Endothelial cell of umbilical vein (primary cell): ENCODE measurements at regions of chr1 and their contacts with region 1.

Region 1: GRCh38 chr1:145858894-145859490 is at the start of gene PIAS3:
- DNase-seq: peak; percentile 97
- H3K4me3 ChIP-seq: peak within 1 kb of the TSS; percentile 64 to 78 (median 71)
- H3K27ac ChIP-seq: peak within 1 kb of the TSS; percentile 43
- H3K4me1 ChIP-seq: peaks cover 7% of the 10 kb centered on the region
- H3K27me3 ChIP-seq: peaks cover 2 to 4% of the 10 kb centered on the region in 2 experiments
- CTCF ChIP-seq: no peak
- POLR2A ChIP-seq: no peak
- total RNA-seq, gene PIAS3: 50.1 and 53.3 TPM in 2 replicates

Region 2: DNA sequence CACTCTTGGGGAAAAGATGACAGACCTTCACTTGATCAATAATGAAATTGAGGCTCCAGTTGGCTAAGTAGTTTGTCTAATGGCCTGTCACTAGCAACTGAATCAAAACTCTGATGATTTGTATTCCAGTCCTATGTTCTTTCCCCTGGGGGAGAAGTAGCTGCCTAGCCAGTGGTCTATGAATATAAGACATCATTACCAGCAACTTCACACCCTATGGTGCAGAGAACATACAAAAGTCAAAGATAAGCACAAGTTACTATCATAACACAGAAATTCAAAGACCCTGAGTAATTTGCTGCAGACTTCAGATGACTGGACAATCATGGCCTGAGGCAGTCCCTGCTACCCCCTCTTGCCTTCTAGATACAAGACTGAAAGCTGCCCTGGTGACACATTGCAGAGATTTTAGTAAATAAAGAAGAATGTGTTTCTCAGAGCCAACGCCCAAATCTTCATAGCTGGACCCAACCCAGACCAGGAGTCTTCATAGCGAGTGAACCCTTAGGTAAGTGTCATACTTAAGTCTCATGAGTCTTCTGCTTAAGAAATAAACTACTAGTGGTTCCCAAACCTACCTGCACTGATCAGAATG is 152.8 kb before region 1 on chr1:
- CTCF ChIA-PET with region 1: no interaction called
- POLR2A ChIA-PET with region 1: no interaction called
- dilution Hi-C with region 1: no loop called
- intact Hi-C with region 1: no loop called
- DNase-seq: no peak
- H3K4me3 ChIP-seq: no peak overlapping the region
- H3K27ac ChIP-seq: no peak overlapping the region
- H3K4me1 ChIP-seq: no peaks in the 10 kb centered on the region
- H3K27me3 ChIP-seq: peaks cover 8 to 11% of the 10 kb centered on the region in 2 experiments
- CTCF ChIP-seq: no peak
- POLR2A ChIP-seq: no peak

Region 3: DNA sequence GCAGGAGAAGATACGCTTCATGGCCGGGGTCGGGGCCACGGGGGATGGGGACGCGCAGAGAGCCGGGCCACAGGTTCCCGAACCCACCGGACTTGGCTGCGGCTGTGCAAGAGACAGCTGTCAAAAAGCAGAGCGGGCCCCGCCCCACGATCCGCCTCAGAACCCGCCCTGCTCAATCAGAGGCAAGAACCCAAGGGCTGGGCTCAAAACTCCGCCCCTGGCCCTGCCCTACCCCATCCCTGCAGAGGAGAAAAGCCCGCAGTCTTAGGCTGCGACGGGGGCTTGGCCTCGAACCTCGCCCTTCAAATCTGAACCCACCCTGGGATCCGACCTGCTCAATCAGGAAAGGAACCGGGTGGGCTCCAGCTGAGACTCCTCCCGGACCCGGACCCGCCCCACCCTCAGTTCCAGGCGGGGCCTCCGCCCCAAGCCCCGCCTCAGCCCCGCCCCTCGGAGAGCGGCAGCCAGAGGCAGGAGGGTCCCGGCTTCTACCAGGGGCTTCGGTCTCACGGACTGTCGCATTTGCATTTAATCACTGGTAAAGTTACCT is 26.8 kb after region 1 on chr1 and contains the start of gene ANKRD35:
- CTCF ChIA-PET with region 1: interaction called, 53 read pairs
- POLR2A ChIA-PET with region 1: interaction called, 5 read pairs
- dilution Hi-C with region 1: no loop called
- intact Hi-C with region 1: loop called (anchors 1 kb)
- DNase-seq: peak; percentile 80
- H3K4me3 ChIP-seq: peak within 1 kb of the TSS; percentile 64 to 94 (median 68)
- H3K27ac ChIP-seq: no peak within 1 kb of the TSS
- H3K4me1 ChIP-seq: peaks cover 23% of the 10 kb centered on the region
- H3K27me3 ChIP-seq: no peaks in the 10 kb centered on the region
- CTCF ChIP-seq: no peak
- POLR2A ChIP-seq: no peak
- total RNA-seq, gene ANKRD35: 0.14 and 0.20 TPM in 2 replicates

Region 4: DNA sequence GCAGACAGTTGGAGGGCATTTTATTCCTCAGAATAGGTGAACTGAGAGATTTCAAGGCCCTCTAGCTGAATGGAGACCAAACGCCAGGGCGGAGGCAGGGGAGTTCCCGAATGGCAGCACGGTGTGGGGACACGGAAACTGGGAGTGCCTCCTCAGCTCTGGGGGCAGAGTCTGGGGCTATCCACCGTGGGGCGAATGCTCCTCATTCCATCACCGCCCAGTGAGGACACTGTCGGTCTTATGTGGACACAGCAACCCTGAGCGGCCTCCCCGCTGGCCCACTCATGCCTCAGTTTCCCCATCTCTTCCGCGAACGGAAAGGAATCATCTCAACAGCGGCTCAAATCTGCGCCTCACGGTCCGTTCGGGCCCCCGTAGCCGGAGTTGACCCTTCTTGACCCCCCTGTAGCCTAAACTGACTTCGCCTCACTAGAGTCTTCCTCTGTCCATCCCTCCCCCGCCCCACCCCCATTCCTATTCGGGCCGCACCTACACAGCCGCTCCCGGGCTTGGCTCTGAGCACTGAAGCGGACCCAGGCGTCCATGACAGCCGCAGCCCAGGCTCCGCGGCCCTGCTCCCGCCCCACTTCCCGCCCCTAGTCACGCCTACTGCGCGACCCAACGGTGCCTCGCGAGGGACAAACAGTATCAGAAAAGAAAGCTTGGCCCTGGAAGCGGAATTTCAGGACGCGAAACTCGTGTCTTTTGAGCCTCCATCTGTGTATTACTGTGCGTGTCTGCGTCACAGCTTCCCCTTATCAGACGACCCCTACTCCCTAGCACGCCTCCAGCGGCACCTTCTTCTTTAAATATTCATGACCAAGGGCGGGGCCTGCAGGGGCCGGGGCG is 59.4 kb after region 1 on chr1 and contains the start of gene PEX11B:
- CTCF ChIA-PET with region 1: interaction called, 3 read pairs
- POLR2A ChIA-PET with region 1: interaction called, 5 read pairs
- dilution Hi-C with region 1: no loop called
- intact Hi-C with region 1: loop called (anchors 2 kb)
- DNase-seq: peak; percentile 96
- H3K4me3 ChIP-seq: peak within 1 kb of the TSS; percentile 45 to 77 (median 62)
- H3K27ac ChIP-seq: peak within 1 kb of the TSS; percentile 19
- H3K4me1 ChIP-seq: peaks cover 16% of the 10 kb centered on the region
- H3K27me3 ChIP-seq: no peaks in the 10 kb centered on the region
- CTCF ChIP-seq: no peak
- POLR2A ChIP-seq: peak; percentile 63
- total RNA-seq, gene PEX11B: 29.0 and 30.5 TPM in 2 replicates

Region 5: DNA sequence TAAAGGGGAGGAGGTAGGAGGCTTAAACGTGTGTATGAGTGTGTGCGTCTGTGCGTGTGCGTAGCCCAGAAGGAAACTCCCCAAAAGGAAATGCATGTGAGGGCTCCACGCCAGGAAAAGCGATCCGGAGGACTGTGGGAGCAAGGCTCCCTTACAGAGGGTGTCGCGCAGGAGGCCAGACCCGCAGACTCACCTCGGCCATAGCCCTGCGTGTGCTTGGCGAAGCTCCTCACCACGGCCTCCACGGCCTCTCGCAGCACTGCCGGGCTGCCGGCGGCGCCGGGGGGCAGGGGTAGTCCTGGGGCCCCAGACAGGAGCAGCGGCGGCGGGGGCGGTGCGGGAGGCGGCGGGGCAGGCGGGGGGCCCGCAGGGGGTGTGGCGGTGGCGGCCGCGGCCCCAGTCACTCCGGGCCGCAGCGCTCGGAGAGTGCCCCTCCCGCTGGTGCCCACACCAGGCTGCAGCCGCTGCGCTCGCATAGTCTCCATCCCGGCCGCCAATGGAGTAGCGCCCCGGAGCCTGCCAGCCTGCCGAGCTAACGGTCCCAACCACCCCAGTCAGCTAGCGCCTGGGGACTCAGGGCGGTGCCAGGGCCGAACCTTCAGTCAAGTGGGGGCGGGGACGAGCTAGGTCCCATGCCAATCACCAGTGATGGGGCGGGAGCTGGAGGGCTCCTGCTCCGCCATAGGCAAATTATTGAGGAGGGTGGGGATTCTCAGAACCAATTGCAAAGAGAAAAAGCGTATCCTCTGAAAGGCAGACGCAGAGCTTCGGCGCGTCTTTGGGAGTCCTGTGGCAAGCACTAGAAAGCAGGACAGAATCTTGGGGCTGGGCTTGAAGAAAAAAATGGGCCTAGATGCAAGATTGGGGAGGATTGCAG is 98.7 kb after region 1 on chr1 and contains the start of gene LIX1L:
- CTCF ChIA-PET with region 1: no interaction called
- POLR2A ChIA-PET with region 1: interaction called, 3 read pairs
- dilution Hi-C with region 1: no loop called
- intact Hi-C with region 1: loop called (anchors 1 kb)
- DNase-seq: peak; percentile 97
- H3K4me3 ChIP-seq: peak within 1 kb of the TSS; percentile 71 to 87 (median 74)
- H3K27ac ChIP-seq: peak within 1 kb of the TSS; percentile 96
- H3K4me1 ChIP-seq: peaks cover 50% of the 10 kb centered on the region
- H3K27me3 ChIP-seq: no peaks in the 10 kb centered on the region
- CTCF ChIP-seq: no peak
- POLR2A ChIP-seq: peak; percentile 98
- total RNA-seq, gene LIX1L: 54.9 and 55.6 TPM in 2 replicates

Region 6: DNA sequence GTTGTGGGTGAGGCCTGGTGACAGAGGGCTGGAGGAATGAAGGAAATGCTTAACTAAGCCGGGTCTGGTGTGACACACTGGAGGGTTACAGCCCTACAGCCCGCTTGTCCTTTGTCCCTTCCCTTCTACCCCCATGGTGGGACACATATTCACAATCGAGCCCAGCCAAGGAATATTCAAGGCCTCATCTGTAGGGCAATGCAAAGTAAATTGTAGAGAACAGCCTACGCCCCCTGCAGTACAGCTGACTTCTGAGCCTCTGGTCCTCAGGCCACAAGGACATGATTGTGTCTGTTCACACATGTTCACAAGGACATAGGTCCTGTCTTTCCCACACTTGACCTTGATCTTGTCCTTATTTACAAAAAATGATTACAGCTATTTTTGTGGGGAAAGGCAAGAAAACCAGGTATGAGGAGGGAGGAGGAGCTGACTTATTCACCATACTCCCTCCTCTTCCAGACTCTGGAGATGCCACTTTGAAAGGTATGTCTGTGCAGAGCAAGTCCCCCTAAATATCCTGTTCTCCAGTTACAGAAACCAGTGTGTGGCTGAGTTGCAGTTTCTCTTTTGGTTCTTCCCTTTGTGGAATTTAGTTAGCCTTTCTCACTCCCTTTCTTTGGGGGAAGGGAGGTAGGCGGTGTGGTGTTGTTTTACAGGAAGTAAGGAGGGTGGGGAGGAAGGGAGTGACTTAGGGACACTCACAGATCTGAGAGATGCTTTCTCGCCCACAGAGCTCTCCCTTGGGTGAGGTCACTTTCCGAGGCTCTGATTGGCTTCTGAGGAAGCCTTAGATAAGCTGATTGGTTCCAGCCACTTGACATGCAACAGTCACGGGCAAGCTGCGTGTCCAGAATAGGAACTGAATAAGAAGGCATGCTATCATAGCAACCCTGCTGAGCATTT is 120.1 kb after region 1 on chr1:
- CTCF ChIA-PET with region 1: interaction called, 10 read pairs
- POLR2A ChIA-PET with region 1: no interaction called
- dilution Hi-C with region 1: no loop called
- intact Hi-C with region 1: no loop called
- DNase-seq: peak; percentile 98
- H3K4me3 ChIP-seq: peak overlapping the region in 1 of 3 experiments; percentile 37
- H3K27ac ChIP-seq: peak overlapping the region; percentile 89
- H3K4me1 ChIP-seq: peaks cover 40% of the 10 kb centered on the region
- H3K27me3 ChIP-seq: no peaks in the 10 kb centered on the region
- CTCF ChIP-seq: no peak
- POLR2A ChIP-seq: peak; percentile 52